A673 (cell line): ENCODE measurements at regions of chr12 and their contacts with region 1.

Region 1: GRCh38 chr12:46153268-46153872 is 115.5 kb downstream of the SLC38A1 start:
- DNase-seq: peak; percentile 55
- H3K4me3 ChIP-seq: no peak overlapping the region
- H3K27ac ChIP-seq: no peak overlapping the region
- H3K4me1 ChIP-seq: peaks cover 35% of the 10 kb centered on the region
- H3K27me3 ChIP-seq: no peaks in the 10 kb centered on the region
- CTCF ChIP-seq: peak; percentile 87

Region 2: DNA sequence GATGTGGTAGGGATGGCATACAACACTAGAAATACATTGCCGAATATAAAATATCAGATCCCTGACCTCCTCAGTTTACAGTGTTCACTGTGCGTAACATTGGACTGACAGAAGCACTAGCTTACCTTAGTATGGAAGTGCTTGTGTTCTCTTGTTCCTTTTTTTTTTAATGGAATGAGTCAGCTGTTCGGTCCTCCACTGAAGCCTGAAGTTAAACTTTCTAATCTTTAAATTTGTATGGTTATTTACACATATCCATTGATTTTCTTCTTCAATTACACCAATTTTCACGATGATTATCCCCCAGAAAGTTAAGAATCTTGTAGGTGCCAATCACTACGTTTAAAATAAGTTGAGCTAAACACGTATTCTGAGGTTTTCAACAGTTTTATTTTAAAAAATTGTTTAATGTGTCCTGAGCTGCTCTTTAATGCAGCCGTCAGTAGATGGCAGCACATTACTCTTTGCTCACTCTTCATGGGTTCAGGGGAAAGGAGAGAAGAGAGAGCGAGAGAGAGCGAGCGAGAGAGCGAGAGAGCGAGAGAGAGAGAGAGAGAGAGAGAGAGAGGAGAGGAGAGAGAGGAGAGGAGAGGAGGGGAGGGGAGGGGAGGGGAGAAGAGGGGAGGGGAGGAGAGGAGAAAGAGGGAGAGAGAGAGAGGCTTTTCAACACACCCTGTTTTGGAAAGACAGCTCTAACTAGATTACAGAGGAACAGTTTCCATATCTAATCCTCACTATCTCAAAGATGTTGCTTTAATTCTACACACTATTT is 28.3 kb before region 1 on chr12:
- CTCF ChIA-PET with region 1: interaction called, 17 read pairs
- POLR2A ChIA-PET with region 1: interaction called, 3 read pairs
- intact Hi-C with region 1: no loop called
- DNase-seq: peak; percentile 92
- H3K4me3 ChIP-seq: peak overlapping the region; percentile 18
- H3K27ac ChIP-seq: peak overlapping the region; percentile 3
- H3K4me1 ChIP-seq: no peaks in the 10 kb centered on the region
- H3K27me3 ChIP-seq: no peaks in the 10 kb centered on the region
- CTCF ChIP-seq: peak; percentile 93

Region 3: DNA sequence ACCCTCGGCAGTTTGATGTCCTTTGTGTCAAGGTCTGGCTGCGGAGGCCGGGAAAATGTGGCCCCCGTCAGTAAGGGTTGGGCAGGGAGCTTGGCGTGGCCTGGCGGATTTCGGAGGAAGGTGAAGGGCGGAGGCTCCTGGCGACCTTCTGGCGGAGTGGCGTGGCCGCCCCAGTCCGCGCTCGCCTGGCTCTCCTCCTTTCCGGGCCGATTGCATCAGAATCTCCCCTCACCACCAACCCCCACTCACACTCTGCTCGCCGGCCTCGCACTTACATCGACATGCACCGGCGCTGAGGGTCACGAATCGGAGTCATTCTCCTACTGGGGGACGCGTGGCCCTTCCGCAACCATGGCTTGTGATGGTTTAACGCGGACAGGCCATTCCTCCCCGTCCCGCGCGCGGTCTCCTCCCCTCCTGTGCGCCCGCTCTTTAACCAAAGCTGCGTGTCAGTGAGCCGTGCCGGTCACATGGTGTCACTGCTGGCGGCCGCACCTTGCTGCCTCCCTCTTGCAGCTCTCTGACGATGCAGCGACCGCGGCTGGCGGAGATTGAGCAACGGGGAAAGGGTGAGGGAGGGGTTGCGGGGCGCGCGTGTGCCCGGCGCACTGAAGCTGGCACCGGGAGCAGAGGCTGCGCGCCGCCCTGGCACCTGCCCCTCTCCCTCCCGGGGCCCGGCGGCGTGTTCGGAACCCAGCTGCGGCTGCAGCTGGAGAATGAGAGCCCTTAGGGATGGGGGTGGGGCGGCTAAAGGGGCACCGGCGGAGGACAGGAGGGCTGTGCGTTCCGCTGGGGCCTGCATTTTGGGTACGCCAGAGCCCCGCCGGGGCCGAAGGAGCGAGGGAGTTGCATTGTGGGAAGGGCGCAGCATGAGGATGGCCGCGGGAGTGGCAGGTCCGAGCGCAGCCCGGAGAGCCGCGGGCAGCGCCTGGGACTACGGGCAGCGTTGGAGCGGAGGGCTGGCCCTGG is 115.5 kb after region 1 on chr12 and contains the start of gene SLC38A1:
- CTCF ChIA-PET with region 1: no interaction called
- POLR2A ChIA-PET with region 1: no interaction called
- intact Hi-C with region 1: loop called (anchors 10 kb)
- DNase-seq: peak; percentile 80
- H3K4me3 ChIP-seq: peak within 1 kb of the TSS; percentile 76
- H3K27ac ChIP-seq: peak within 1 kb of the TSS; percentile 73
- H3K4me1 ChIP-seq: peaks cover 17% of the 10 kb centered on the region
- H3K27me3 ChIP-seq: no peaks in the 10 kb centered on the region
- CTCF ChIP-seq: no peak
- total RNA-seq, gene SLC38A1: 78.9 and 88.9 TPM in 2 replicates

Region 4: GRCh38 chr12:46357438-46358324 is 204.3 kb after region 1 on chr12:
- CTCF ChIA-PET with region 1: no interaction called
- POLR2A ChIA-PET with region 1: no interaction called
- intact Hi-C with region 1: loop called (anchors 5 kb)
- DNase-seq: no peak
- H3K4me3 ChIP-seq: no peak overlapping the region
- H3K27ac ChIP-seq: no peak overlapping the region
- H3K4me1 ChIP-seq: peaks cover 2% of the 10 kb centered on the region
- H3K27me3 ChIP-seq: no peaks in the 10 kb centered on the region
- CTCF ChIP-seq: no peak

Region 5: GRCh38 chr12:46933947-46934346 is 780.6 kb after region 1 on chr12:
- CTCF ChIA-PET with region 1: no interaction called
- POLR2A ChIA-PET with region 1: no interaction called
- intact Hi-C with region 1: loop called (anchors 10 kb)
- DNase-seq: peak; percentile 74
- H3K4me3 ChIP-seq: no peak overlapping the region
- H3K27ac ChIP-seq: peak overlapping the region; percentile 45
- H3K4me1 ChIP-seq: peaks cover 3% of the 10 kb centered on the region
- H3K27me3 ChIP-seq: no peaks in the 10 kb centered on the region
- CTCF ChIP-seq: peak; percentile 73